Activated CD4-positive, alpha-beta T cell treated with anti-CD3 and anti-CD28 coated beads for 36 hours (primary cell): ENCODE measurements at regions of chr2 and their contacts with region 1.

Region 1: DNA sequence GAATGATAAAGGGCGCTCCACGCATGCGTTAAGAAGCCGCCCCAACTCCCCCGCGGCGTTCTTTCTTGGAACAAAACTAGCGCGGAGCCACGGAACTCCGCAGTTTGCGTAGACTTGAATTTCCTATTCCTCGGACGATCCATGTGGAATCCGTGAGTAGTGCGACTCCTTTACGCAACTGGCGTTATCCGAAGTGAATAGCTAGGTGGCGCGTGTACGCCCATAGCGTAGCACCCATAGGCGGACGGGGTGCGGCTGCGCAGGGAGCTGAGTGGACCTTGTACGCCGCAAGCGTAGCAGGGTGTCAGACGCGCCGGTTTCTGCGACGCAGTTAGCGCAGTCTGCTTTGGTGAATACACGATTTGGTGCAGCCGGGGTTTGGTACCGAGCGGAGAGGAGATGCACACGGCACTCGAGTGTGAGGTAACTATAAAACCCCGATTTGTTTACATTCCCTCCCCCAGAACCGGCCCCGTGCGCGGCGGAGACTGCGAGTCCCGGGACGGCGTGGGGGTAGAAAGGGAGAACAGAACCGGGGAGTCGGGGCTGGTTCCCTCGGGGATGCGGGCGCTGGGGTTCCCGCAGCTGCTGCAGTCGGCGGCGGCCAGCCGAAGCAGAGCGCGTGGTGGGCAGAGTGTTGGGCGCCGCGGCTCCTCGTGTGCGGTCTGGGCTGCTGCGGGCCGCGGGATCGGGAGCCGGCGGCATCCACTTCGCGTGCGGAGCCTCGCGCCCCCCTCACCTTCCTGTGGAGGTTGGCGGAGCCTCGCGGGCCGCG is at the start of gene SLC39A10:
- DNase-seq: peak; percentile 98
- ATAC-seq: peak; percentile 86
- H3K4me3 Mint-ChIP-seq: peak within 1 kb of the TSS; percentile 86
- H3K27ac Mint-ChIP-seq: peak within 1 kb of the TSS; percentile 99
- H3K4me1 Mint-ChIP-seq: peaks cover 26% of the 10 kb centered on the region
- H3K27me3 Mint-ChIP-seq: no peaks in the 10 kb centered on the region
- total RNA-seq, gene SLC39A10: 24.0 to 27.8 TPM

Region 2: GRCh38 chr2:195318440-195319111 is 338.5 kb before region 1 on chr2:
- CTCF ChIA-PET with region 1: interaction called, 5 read pairs
- POLR2A ChIA-PET with region 1: no interaction called
- intact Hi-C with region 1: loop called (anchors 2 to 5 kb)
- DNase-seq: peak; percentile 60
- ATAC-seq: peak; percentile 57
- H3K4me3 Mint-ChIP-seq: no peak overlapping the region
- H3K27ac Mint-ChIP-seq: no peak overlapping the region
- H3K4me1 Mint-ChIP-seq: peaks cover 10% of the 10 kb centered on the region
- H3K27me3 Mint-ChIP-seq: no peaks in the 10 kb centered on the region

Region 3: GRCh38 chr2:195486987-195487644 is 169.9 kb before region 1 on chr2:
- CTCF ChIA-PET with region 1: interaction called, 9 read pairs
- POLR2A ChIA-PET with region 1: no interaction called
- intact Hi-C with region 1: loop called in 1 of 2 experiments (anchors 2 kb)
- DNase-seq: peak; percentile 11
- ATAC-seq: peak; percentile 82
- H3K4me3 Mint-ChIP-seq: no peak overlapping the region
- H3K27ac Mint-ChIP-seq: no peak overlapping the region
- H3K4me1 Mint-ChIP-seq: peaks cover 20% of the 10 kb centered on the region
- H3K27me3 Mint-ChIP-seq: no peaks in the 10 kb centered on the region

Region 4: DNA sequence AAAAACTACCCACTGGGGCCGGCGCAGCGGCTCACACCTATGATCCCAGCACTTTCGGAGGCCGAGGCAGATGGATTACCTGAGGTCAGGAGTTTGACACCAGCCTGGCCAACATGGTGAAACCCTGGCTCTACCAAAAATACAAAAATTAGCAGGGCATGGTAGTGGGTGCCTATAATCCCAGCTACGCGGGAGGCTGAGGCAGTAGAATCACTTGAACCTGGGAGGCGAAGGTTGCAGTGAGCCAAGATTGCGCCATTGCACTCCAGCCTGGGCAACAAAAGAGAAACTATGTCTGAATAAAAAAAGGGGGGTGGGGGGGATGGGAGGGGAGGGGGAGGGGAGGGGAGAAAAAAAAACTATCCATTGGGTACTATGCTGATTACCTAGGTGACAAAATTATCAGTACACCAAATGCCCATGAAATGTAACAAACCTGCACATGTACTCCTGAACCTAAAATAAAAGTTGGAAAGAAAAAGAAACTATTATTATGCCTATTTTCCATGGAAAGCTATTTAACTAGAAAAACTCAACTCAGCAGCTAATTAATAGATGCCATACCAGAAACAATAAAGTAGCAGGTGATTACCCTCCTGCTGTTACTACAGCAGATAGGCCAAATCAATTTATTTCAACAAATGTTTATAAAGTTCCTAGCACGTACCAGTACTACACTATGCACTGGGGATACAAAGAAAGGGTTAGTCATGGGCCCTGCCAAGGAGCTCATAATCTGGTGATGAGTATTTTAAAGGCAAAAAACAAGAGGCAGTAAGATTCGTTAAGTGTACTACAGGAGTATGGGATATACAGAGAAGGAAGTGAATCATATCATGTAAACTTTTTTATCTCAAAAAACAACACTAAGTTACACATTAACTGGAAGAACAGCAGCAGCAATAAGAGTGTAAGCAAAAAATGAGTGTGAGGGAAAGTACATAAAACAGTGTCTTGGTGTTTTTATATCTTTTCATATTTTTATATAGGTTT is 112.8 kb before region 1 on chr2:
- CTCF ChIA-PET with region 1: interaction called, 6 read pairs
- POLR2A ChIA-PET with region 1: interaction called, 10 read pairs
- intact Hi-C with region 1: loop called in 1 of 2 experiments (anchors 1 kb)
- DNase-seq: peak; percentile 63
- ATAC-seq: peak; percentile 99
- H3K4me3 Mint-ChIP-seq: peak overlapping the region; percentile 15
- H3K27ac Mint-ChIP-seq: peak overlapping the region; percentile 96
- H3K4me1 Mint-ChIP-seq: peaks cover 66% of the 10 kb centered on the region
- H3K27me3 Mint-ChIP-seq: no peaks in the 10 kb centered on the region

Region 5: DNA sequence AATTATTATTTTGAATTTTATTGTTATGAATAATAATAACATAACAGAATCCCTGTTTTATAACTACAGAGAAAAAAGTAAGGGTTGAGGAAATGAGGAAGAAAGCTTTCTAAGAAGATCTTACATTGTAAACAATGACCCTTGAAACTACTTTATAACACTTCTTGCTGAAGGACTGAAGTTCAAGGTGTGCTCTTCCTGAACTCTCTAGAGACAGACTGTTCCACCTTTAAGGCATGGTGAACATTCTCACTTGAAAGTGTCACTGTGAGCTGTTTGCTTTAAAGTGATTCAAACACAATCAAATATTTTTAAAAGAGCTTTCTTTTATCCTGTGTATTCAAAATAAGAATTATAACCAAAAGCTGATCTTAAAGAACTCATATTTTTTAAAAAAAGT is 280.1 kb after region 1 on chr2:
- CTCF ChIA-PET with region 1: no interaction called
- POLR2A ChIA-PET with region 1: no interaction called
- intact Hi-C with region 1: loop called in 1 of 2 experiments (anchors 5 kb)
- DNase-seq: no peak
- ATAC-seq: no peak
- H3K4me3 Mint-ChIP-seq: no peak overlapping the region
- H3K27ac Mint-ChIP-seq: no peak overlapping the region
- H3K4me1 Mint-ChIP-seq: no peaks in the 10 kb centered on the region
- H3K27me3 Mint-ChIP-seq: peaks cover 2% of the 10 kb centered on the region

Region 6: DNA sequence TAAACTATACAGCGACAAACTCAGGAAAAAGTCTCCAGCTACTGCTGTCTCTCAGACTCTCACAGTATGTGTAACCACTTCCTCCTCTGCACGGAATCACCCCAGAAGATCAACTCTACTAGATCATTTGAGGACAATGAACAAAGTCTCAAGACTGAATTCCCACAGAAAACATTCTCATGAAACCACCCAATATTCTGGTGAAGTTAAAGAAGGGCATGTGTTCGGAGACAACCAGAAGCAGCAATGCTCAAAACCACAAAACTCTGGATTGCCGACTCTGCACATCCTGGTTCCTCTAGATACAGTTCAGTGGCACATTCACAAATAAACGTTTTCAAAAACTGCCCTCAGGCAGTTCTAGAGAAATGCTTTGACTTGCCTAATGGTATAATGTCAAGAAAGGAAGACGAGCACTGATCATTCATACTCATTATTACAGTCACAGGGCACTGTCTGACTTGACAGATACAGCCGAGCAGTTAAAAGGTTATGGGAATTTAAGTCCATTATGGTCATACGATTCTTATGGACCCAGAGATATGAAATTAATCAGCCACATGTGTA is 606.2 kb after region 1 on chr2:
- CTCF ChIA-PET with region 1: no interaction called
- POLR2A ChIA-PET with region 1: interaction called, 3 read pairs
- intact Hi-C with region 1: loop called (anchors 5 kb)
- DNase-seq: peak; percentile 51
- ATAC-seq: peak; percentile 62
- H3K4me3 Mint-ChIP-seq: peak overlapping the region; percentile 70
- H3K27ac Mint-ChIP-seq: peak overlapping the region; percentile 95
- H3K4me1 Mint-ChIP-seq: peaks cover 86% of the 10 kb centered on the region
- H3K27me3 Mint-ChIP-seq: no peaks in the 10 kb centered on the region